ENCODE measurements at regions of chr6 and their contacts with region 1.

Region 1: DNA sequence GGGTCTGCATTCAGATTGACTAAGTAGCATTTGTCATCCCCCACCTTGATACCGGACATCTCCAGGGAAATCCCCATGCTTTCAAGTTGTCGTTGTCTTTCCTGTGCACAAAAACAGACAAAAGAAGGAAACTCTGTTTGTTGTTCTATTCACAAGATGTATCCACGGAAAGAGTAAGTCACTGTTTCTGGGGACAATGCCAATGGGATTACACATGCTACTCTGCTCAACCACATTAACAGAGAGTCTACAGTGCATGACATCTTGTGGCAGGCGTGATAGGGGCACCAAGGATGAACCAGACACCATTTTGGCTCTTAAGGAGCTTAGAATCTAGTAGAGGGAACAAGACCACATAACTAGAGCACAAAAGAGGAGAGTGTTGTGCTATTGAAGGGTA is 124.4 kb upstream of the NUP153 start:
- ATAC-seq: peak in 1 of 8 experiments; percentile 43
- H3K4me3 ChIP-seq: no peak overlapping the region
- H3K27ac ChIP-seq: no peak overlapping the region
- H3K4me1 ChIP-seq: no peaks in the 10 kb centered on the region

Region 2: GRCh38 chr6:16286148-16286522 is 1545.0 kb before region 1 on chr6:
- in situ Hi-C with region 1: no loop called
- ATAC-seq: peak; percentile 73 to 96 (median 84)
- H3K4me3 ChIP-seq: no peak overlapping the region
- H3K27ac ChIP-seq: no peak overlapping the region
- H3K4me1 ChIP-seq: no peaks in the 10 kb centered on the region

Region 3: DNA sequence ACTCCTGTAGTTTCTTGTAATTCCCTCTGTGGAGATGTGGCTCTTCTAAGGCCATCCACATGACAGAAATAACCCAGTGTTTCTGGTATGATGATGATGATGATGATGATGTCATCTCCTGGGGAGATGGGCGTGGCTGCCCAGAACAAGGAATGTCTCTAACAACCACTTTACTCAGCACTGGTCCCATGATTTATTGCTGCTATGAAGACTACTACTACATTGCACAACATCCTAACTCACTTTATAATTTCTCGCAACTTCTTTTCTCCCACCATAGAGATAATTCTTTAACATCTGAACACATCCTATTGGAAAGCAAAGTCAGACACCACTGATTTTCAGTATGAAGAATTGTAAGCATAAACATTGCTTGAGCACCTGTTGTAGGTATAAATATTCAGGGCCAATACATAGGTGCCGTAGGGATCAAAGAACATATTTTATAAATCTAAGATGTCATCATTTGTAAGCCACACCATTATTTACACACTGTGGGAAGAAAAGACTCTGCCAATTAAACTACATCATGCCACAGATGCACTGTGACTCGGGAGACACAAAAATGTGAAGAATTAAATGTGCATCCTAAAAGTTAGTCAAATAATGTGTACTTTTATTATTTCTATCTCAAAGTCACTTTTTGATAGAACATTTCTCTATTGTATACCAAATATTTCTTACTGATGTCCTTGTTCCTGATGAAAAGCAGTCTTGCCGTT is 317.3 kb after region 1 on chr6:
- in situ Hi-C with region 1: loop called in 1 of 9 experiments (anchors 25 kb)
- ATAC-seq: peak in 5 of 8 experiments; percentile 4 to 76 (median 38)
- H3K4me3 ChIP-seq: no peak overlapping the region
- H3K27ac ChIP-seq: no peak overlapping the region
- H3K4me1 ChIP-seq: peaks cover under 1% of the 10 kb centered on the region in 2 donors